Activated CD4-positive, alpha-beta memory T cell treated with anti-CD3 and anti-CD28 coated beads for 36 hours (primary cell): ENCODE measurements at regions of chr3 and their contacts with region 1.

Region 1: DNA sequence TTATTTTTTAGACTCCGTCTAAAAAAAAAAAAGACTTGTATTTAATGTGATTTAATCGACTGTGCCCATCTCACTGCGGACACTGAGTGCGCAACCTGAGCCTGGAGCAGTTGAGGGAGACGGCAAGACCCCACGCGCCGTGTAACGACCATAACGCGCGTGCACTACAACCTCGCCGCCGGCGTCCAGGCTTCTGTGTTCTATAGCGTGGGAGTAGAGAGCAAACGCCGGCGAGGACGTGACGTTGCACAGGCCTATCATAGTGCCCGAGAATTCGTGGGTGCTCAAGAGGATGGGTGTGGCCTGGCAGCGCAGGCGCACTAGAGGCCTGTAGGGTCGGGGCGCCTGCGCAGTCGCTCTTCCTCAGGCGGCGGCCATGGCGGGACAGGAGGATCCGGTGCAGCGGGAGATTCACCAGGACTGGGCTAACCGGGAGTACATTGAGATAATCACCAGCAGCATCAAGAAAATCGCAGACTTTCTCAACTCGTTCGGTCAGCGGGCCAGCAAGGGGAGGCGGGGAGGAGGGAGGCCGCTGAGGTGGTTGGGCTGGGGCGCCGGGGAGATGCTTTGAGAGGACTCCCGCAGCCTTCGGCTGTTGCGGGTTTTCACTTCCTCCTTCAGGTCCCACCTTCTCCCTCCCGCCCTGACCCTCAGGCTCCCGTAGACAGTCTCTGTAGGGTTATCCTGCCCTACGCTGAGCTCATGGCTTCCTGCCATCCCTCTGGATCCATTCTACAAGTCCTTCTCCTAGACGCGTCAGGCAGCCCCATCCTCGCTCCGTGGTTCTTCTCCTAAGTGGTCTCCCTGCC is at the start of gene BRK1:
- DNase-seq: peak; percentile 97
- H3K4me3 Mint-ChIP-seq: peak within 1 kb of the TSS; percentile 96
- H3K27ac Mint-ChIP-seq: peak within 1 kb of the TSS; percentile 94
- H3K4me1 Mint-ChIP-seq: peaks cover 33% of the 10 kb centered on the region
- H3K27me3 Mint-ChIP-seq: peaks cover 2% of the 10 kb centered on the region
- total RNA-seq, gene BRK1: 70.3 to 76.1 TPM

Region 2: GRCh38 chr3:9746330-9746729 is 369.2 kb before region 1 on chr3:
- CTCF ChIA-PET with region 1: no interaction called
- POLR2A ChIA-PET with region 1: no interaction called
- intact Hi-C with region 1: no loop called
- DNase-seq: peak; percentile 57
- H3K4me3 Mint-ChIP-seq: no peak overlapping the region
- H3K27ac Mint-ChIP-seq: peak overlapping the region; percentile 74
- H3K4me1 Mint-ChIP-seq: peaks cover 30% of the 10 kb centered on the region
- H3K27me3 Mint-ChIP-seq: no peaks in the 10 kb centered on the region

Region 3: GRCh38 chr3:10026084-10026890 is 89.2 kb before region 1 on chr3 and contains the start of gene FANCD2:
- CTCF ChIA-PET with region 1: no interaction called
- POLR2A ChIA-PET with region 1: no interaction called
- intact Hi-C with region 1: loop called (anchors 1 kb)
- DNase-seq: peak; percentile 96
- H3K4me3 Mint-ChIP-seq: peak within 1 kb of the TSS; percentile 97
- H3K27ac Mint-ChIP-seq: peak within 1 kb of the TSS; percentile 98
- H3K4me1 Mint-ChIP-seq: peaks cover 24% of the 10 kb centered on the region
- H3K27me3 Mint-ChIP-seq: no peaks in the 10 kb centered on the region
- total RNA-seq, gene FANCD2: 83.9 to 89.4 TPM

Region 4: DNA sequence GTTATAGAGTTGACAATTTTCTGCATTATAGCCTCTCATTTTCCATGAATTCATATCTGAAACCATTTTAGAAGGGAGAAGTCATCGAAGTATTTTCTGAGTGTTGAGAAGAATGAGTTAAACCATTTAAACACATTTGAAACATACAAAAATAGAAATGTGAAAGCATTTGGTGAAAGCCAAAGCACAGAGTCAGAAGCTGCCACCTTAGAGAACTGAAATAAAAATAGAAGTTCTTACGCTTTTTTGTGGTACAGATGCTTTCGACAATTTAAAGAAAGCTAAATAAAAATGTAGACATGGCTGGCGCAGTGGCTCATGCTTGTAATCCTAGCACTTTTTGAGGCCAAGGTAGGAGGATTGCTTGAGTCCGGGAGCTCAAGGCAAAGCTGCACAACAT is 16.5 kb before region 1 on chr3:
- CTCF ChIA-PET with region 1: no interaction called
- POLR2A ChIA-PET with region 1: no interaction called
- intact Hi-C with region 1: no loop called
- DNase-seq: no peak
- H3K4me3 Mint-ChIP-seq: no peak overlapping the region
- H3K27ac Mint-ChIP-seq: no peak overlapping the region
- H3K4me1 Mint-ChIP-seq: no peaks in the 10 kb centered on the region
- H3K27me3 Mint-ChIP-seq: no peaks in the 10 kb centered on the region

Region 5: DNA sequence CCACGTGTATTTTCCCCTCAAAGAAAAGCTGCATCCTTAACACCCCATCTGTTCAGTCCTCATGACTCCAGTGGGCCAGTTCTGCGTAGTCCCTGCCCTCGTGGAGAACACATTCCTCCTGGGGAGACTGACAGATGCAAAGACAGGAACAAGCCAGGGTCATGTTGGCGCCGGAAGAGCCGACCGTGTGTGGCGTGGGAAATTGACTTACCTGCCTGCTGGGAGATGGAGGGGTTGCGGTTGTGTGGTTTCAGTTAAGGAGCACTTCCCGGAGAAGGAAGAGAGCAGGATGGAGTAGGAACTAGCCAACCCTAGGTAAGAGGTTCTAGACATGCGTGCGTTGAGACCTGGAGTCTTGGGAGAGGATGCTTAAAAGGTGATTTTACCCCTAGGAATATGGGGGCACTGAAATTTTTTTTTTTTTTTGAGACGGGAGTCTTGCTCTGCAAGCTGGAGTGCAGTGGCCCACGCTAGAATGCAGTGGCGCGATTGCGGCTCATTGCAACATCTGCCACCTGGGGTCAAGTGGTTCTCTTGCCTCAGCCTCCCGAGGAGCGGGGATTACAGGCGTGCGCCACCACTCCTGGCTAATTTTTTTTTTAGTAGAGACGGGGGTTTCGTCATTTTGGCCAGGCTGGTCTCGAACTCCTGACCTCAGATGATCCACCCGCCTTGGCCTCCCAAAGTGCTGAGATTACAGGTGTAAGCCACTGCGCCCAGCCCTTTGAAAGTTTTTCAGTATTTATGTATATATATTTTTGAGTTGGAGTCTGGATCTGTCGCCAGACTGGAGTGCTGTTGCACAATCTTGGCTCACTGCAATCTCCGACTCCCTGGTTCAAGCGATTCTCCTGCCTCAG is 27.4 kb after region 1 on chr3:
- CTCF ChIA-PET with region 1: no interaction called
- POLR2A ChIA-PET with region 1: interaction called, 8 read pairs
- intact Hi-C with region 1: loop called (anchors 1 kb)
- DNase-seq: peak; percentile 53
- H3K4me3 Mint-ChIP-seq: peak overlapping the region; percentile 96
- H3K27ac Mint-ChIP-seq: peak overlapping the region; percentile 83
- H3K4me1 Mint-ChIP-seq: peaks cover 27% of the 10 kb centered on the region
- H3K27me3 Mint-ChIP-seq: no peaks in the 10 kb centered on the region

Region 6: GRCh38 chr3:10164546-10165393 is 49.2 kb after region 1 on chr3 and contains the start of gene IRAK2:
- CTCF ChIA-PET with region 1: no interaction called
- POLR2A ChIA-PET with region 1: no interaction called
- intact Hi-C with region 1: loop called (anchors 2 kb)
- DNase-seq: peak; percentile 76
- H3K4me3 Mint-ChIP-seq: peak within 1 kb of the TSS; percentile 73
- H3K27ac Mint-ChIP-seq: no peak within 1 kb of the TSS
- H3K4me1 Mint-ChIP-seq: peaks cover 17% of the 10 kb centered on the region
- H3K27me3 Mint-ChIP-seq: no peaks in the 10 kb centered on the region
- total RNA-seq, gene IRAK2: 7.3 to 8.3 TPM

Region 7: GRCh38 chr3:10224784-10225665 is 109.5 kb after region 1 on chr3:
- CTCF ChIA-PET with region 1: no interaction called
- POLR2A ChIA-PET with region 1: interaction called, 3 read pairs
- intact Hi-C with region 1: loop called (anchors 1 kb)
- DNase-seq: peak; percentile 84
- H3K4me3 Mint-ChIP-seq: peak overlapping the region; percentile 46
- H3K27ac Mint-ChIP-seq: peak overlapping the region; percentile 92
- H3K4me1 Mint-ChIP-seq: peaks cover 75% of the 10 kb centered on the region
- H3K27me3 Mint-ChIP-seq: no peaks in the 10 kb centered on the region

Region 8: DNA sequence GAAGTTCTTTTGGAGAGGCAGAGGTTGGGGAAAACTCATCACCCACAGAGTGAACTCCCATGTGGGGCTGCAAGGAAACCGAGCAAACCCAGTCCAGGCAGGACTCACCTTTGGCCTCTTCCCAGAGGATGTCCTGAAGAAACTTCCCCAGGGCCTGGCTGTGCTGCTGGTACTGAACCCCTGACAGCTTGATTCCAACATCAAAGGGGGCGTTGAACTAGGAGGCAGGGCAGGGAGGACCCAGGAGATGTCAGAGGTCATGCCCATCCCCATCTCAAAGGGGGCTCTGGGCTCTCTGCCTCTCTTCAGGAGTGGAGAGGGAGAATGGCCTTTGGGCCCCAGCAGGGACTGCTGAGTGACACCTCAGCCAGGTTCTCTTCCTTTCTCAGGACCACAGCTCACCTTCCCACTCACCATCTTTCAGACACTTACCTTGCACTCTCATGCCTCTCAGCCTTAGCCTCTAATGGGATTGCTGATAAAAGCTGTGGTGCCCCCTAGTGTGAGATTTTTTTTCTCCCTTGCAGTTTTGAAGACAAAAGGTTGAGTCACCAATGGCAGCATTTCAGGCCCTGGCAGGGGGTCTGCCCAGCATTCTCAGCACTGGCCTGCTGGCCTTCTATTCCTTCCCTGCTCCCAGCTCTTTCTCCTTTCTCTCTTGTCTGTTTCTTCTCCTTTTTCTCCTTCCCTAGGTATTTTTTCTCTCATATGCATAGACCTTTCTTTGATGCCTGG is 171.2 kb after region 1 on chr3:
- CTCF ChIA-PET with region 1: no interaction called
- POLR2A ChIA-PET with region 1: no interaction called
- intact Hi-C with region 1: loop called (anchors 5 kb)
- DNase-seq: peak; percentile 43
- H3K4me3 Mint-ChIP-seq: no peak overlapping the region
- H3K27ac Mint-ChIP-seq: peak overlapping the region; percentile 18
- H3K4me1 Mint-ChIP-seq: peaks cover 45% of the 10 kb centered on the region
- H3K27me3 Mint-ChIP-seq: no peaks in the 10 kb centered on the region

Region 9: GRCh38 chr3:10322352-10322710 is 206.8 kb after region 1 on chr3:
- CTCF ChIA-PET with region 1: no interaction called
- POLR2A ChIA-PET with region 1: no interaction called
- intact Hi-C with region 1: loop called (anchors 1 kb)
- DNase-seq: peak; percentile 28
- H3K4me3 Mint-ChIP-seq: no peak overlapping the region
- H3K27ac Mint-ChIP-seq: no peak overlapping the region
- H3K4me1 Mint-ChIP-seq: peaks cover 22% of the 10 kb centered on the region
- H3K27me3 Mint-ChIP-seq: peaks cover 4% of the 10 kb centered on the region